Dendritic cell treated with granulocyte-macrophage colony-stimulating factor and Interleukin-4, amounts not matched to agents 40 ng/mL and 50 ng/mL, for 4 days (primary cell): ENCODE measurements at regions of chr12 and their contacts with region 1.

Region 1: DNA sequence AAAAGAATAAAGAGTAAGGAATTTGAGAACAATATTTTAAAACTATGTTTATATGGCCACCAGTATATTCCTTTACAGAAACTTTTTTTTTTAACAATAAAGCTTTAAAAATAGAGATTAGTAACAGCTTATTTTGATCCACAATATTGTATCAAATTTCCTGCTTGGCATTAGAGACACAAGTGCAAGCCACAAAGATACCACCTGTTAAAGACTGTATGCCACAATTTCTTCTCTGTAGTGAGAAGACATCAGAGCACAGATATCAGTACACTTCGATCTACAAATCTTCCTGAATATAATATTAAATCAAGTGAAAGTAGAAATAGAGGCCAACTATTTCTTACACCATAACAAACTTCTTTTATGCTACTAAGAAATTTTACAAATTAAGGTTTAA is 68.0 kb downstream of the GALNT4 start:
- H3K4me3 Mint-ChIP-seq: no peak overlapping the region
- H3K27ac Mint-ChIP-seq: no peak overlapping the region
- H3K4me1 Mint-ChIP-seq: peaks cover 23% of the 10 kb centered on the region
- H3K27me3 Mint-ChIP-seq: no peaks in the 10 kb centered on the region

Region 2: GRCh38 chr12:88743946-88744685 is 712.4 kb before region 1 on chr12:
- intact Hi-C with region 1: no loop called
- H3K4me3 Mint-ChIP-seq: no peak overlapping the region
- H3K27ac Mint-ChIP-seq: no peak overlapping the region
- H3K4me1 Mint-ChIP-seq: no peaks in the 10 kb centered on the region
- H3K27me3 Mint-ChIP-seq: no peaks in the 10 kb centered on the region

Region 3: GRCh38 chr12:89267404-89267803 is 189.2 kb before region 1 on chr12:
- intact Hi-C with region 1: loop called (anchors 5 kb)
- H3K4me3 Mint-ChIP-seq: no peak overlapping the region
- H3K27ac Mint-ChIP-seq: no peak overlapping the region
- H3K4me1 Mint-ChIP-seq: peaks cover 21% of the 10 kb centered on the region
- H3K27me3 Mint-ChIP-seq: no peaks in the 10 kb centered on the region

Region 4: DNA sequence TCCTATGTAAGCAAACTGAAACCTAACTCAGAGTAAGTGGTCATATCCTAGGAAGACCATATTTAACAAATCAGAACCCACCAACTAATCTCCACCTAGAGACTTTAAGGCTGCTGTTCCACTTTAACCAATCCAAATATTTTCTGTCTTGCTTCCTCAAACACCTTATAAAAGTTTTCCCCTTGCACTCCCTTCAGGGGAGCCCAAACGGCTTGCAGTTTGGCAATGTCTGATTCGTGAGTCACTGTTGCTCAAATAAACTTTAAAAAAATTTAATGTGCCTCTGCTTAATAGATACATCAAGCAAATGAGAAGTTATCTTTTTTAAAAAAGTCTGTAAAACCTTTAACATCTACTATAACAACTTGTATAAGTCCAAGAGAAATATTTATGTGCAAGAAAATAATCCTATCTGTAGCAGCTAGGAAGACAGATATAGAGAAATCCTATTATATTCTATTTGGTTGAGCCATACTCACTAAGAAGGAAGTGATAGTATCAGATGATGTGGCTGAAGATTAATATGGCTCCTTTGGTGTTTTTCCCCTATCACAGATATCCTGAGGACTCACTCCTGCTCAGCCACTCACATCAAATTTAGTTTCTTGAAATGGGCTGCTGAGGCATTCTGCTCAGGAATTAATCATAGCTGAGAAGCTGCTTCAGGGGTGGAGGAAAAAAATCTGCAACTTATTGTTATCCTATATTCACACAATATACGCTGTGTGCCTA is 39.2 kb before region 1 on chr12:
- intact Hi-C with region 1: loop called (anchors 5 kb)
- H3K4me3 Mint-ChIP-seq: no peak overlapping the region
- H3K27ac Mint-ChIP-seq: peak overlapping the region; percentile 19
- H3K4me1 Mint-ChIP-seq: peaks cover 24% of the 10 kb centered on the region
- H3K27me3 Mint-ChIP-seq: no peaks in the 10 kb centered on the region